ENCODE measurements at regions of chr7 and their contacts with region 1.

Region 1: DNA sequence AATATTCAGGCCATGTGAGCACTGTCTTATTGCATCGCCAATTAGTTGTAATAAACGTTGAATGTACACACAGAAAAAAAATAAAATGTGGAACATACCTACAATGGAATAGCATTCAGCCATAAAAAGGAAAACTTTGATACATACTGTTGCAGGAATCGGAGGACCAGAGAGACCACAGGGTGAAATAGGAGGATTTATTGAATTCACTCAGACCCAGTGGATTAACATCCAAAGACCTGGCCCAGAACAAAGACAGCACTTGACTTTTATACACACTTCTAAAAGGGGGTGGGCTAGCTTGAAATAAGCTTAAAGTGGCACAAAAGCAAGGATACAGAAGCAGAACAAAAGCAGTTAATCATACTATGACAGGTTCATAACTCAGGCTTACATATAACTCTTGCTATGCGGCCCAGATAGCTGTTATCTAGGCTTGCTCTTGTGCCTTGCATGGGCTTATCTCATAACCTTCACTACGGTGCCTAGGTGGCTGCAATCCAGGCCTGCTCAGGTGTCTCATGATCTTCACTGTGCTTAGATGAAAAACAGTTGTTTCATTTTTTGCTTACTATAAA is 292.2 kb upstream of the TAC1 start:
- DNase-seq: no peak
- ATAC-seq: no peak
- H3K4me3 ChIP-seq: no peak overlapping the region
- H3K4me1 ChIP-seq: no peaks in the 10 kb centered on the region
- CTCF ChIP-seq: no peak

Region 2: DNA sequence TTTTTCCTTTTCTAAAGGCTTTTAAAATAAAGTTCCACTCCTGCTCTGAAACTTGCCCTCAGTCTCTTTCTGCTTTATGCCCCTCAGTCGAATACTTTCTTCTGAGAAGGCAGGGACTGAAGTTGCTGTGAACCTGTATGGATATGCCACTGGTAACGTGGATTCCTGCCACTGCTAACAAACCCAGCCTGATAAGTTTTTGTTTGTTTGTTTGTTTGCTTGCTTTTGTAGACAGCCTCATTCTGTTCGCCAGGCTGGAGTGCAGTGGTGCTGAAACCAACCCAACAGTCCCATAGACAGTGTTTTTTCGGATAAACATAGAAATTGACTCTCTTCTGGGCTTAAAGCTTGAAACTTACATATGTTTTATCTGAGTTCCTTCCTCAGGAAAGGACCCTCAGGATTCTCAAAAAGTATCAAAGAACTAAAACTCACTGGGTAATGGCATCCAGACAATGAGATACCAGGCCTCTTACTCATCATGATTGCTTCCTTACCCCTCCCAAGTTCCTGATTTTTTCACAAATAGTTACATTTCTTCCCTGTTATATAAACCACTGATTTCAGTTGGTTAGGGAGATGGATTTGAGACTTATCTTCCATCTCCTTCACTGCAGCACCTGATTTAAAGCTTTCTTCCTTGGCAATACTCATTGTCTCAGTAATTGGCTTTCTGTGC is 48.7 kb before region 1 on chr7:
- intact Hi-C with region 1: loop called in 1 of 2 experiments (anchors 5 kb)
- DNase-seq: no peak
- ATAC-seq: no peak
- H3K4me3 ChIP-seq: no peak overlapping the region
- H3K4me1 ChIP-seq: no peaks in the 10 kb centered on the region
- CTCF ChIP-seq: no peak